Gastrocnemius medialis (tissue), 4 donors: ENCODE measurements at regions of chr14 and their contacts with region 1.

Region 1: GRCh38 chr14:60724137-60724619 is at the start of gene SIX4:
- DNase-seq: peak; percentile 86 to 93
- ATAC-seq: peak; percentile 80 to 81
- H3K4me3 ChIP-seq: peak within 1 kb of the TSS; percentile 75 to 98 (median 88)
- H3K27ac ChIP-seq: peak within 1 kb of the TSS; percentile 89 to 99 (median 97)
- H3K4me1 ChIP-seq: peaks cover 23 to 27% of the 10 kb centered on the region in 2 donors
- H3K27me3 ChIP-seq: no peaks in the 10 kb centered on the region
- CTCF ChIP-seq: no peak
- POLR2A ChIP-seq: peak; percentile 84 to 87
- total RNA-seq, gene SIX4: 27.8 to 62.6 (median 46.1) TPM

Region 2: DNA sequence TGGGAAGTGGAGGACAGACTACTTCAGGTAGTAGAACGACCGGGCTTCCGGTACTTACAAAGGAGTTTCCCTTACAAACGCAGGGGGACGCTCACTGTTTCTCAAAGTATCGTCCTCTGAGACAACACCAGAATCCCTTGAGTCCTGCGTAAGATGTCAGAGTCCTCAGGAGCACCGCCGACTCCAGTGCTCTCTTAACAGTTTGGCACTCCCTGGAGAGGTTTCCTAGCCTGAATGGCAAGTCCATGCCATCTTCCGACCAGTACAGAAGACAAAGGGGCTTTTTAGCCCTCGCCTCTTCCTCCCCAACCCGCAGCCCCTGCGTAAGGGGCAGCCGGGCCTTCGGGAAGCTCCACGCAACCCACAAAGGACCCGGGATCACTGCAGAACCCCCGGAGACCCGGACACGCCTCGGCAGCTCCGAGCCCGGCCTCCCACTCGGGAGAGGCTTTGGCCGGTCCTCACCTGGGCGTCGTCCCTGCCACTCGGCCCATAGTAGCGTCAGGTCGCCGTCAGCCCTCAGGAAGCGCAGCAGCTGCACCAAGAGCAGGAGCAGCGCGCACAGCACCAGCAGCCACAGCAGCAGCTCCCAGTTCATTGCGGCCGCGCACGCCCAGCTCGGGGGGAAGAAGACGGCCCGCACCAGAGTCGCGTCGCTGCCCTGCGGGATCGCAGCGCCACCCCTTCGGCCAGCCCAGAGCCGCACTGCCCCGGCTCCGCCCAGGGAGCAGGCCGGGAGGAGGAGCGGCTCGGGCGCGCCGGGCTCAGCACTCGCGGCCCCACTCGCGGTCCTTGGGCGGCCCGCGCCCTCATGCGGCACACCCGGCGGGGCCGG is 559.2 kb before region 1 on chr14 and contains the start of gene DHRS7:
- in situ Hi-C with region 1: no loop called
- intact Hi-C with region 1: no loop called
- DNase-seq: peak; percentile 72 to 83
- ATAC-seq: peak; percentile 42
- H3K4me3 ChIP-seq: peak within 1 kb of the TSS; percentile 81 to 95 (median 92)
- H3K27ac ChIP-seq: peak within 1 kb of the TSS; percentile 97 to 100 (median 99)
- H3K4me1 ChIP-seq: peaks cover 33 to 52% of the 10 kb centered on the region in 2 donors
- H3K27me3 ChIP-seq: no peaks in the 10 kb centered on the region
- CTCF ChIP-seq: peak in 4 of 5 experiments; percentile 32 to 68 (median 40)
- POLR2A ChIP-seq: peak; percentile 71 to 88
- total RNA-seq, gene DHRS7: 937 to 2,179 (median 1,242) TPM

Region 3: GRCh38 chr14:60648934-60649874 is 75.0 kb before region 1 on chr14 and contains the start of gene SIX1:
- in situ Hi-C with region 1: loop called in 1 of 4 experiments (anchors 10 kb)
- intact Hi-C with region 1: loop called (anchors 2 kb)
- DNase-seq: peak; percentile 88 to 89
- ATAC-seq: peak; percentile 33 to 45
- H3K4me3 ChIP-seq: peak within 1 kb of the TSS; percentile 86 to 90 (median 88)
- H3K27ac ChIP-seq: peak within 1 kb of the TSS; percentile 93 to 98 (median 95)
- H3K4me1 ChIP-seq: peaks cover 31 to 38% of the 10 kb centered on the region in 2 donors
- H3K27me3 ChIP-seq: no peaks in the 10 kb centered on the region
- CTCF ChIP-seq: no peak
- POLR2A ChIP-seq: peak; percentile 97 to 99
- total RNA-seq, gene SIX1: 28.3 to 76.4 (median 56.3) TPM

Region 4: DNA sequence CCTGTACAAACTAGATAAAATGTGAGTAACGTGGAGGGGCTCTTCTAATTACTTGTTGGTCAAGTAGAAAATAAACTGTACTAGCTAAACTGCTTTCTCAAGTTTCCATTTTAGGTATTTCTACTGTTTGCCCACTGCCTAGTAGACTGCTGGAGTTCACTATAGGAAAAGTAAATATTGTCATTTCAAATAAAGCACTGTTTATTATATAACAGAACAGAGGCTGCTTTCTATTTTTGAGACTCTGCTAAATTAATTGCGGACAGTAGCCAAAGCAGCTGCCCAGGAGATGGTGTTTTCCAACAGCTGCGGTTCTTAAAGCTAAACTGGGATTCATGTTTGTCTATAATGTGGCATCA is 59.0 kb before region 1 on chr14:
- in situ Hi-C with region 1: loop called in 2 of 4 experiments (anchors 5 to 10 kb)
- intact Hi-C with region 1: no loop called
- DNase-seq: no peak
- ATAC-seq: peak in 1 of 2 donors; percentile 32
- H3K4me3 ChIP-seq: peak overlapping the region in 1 of 4 donors; percentile 7
- H3K27ac ChIP-seq: peak overlapping the region; percentile 54 to 84 (median 62)
- H3K4me1 ChIP-seq: peaks cover 13 to 14% of the 10 kb centered on the region in 2 donors
- H3K27me3 ChIP-seq: no peaks in the 10 kb centered on the region
- CTCF ChIP-seq: no peak
- POLR2A ChIP-seq: no peak

Region 5: DNA sequence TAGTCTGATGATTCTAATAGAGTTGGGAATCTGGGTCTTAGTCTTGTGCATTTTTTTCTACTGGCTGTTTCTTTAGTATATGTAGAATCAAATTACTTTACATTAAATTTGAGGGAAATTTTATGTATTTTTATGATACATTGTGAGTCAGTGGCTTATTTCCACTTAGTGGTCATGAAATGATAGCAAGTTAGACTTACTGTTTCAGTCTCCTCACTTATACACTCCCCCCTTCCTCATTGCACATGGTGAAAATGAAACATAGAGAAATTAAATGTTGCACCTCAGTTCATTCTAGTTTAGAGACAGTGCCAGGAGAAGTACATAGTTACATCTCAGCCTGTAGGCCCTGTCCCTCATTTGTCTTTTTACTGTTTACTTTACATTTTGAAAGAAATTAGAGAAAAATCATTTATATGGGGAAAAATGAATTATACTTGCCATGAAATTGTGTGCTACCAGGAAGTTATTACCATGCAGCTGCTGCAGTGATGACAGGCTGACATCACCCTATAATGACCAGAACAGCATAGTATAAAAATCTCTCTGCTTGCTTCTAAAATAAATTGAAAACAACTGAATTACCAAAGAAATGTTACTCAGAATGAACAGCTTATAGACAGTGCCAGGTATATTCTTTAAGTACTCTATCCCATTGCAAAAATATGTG is 143.5 kb after region 1 on chr14:
- in situ Hi-C with region 1: no loop called
- intact Hi-C with region 1: loop called (anchors 5 kb)
- DNase-seq: no peak
- ATAC-seq: no peak
- H3K4me3 ChIP-seq: no peak overlapping the region
- H3K27ac ChIP-seq: peak overlapping the region; percentile 76 to 87 (median 84)
- H3K4me1 ChIP-seq: peaks cover 54 to 67% of the 10 kb centered on the region in 2 donors
- H3K27me3 ChIP-seq: no peaks in the 10 kb centered on the region
- CTCF ChIP-seq: no peak
- POLR2A ChIP-seq: no peak

Region 6: GRCh38 chr14:61025251-61026223 is 301.4 kb after region 1 on chr14:
- in situ Hi-C with region 1: no loop called
- intact Hi-C with region 1: loop called (anchors 2 kb)
- DNase-seq: peak; percentile 32 to 62
- ATAC-seq: peak; percentile 84 to 87
- H3K4me3 ChIP-seq: no peak overlapping the region
- H3K27ac ChIP-seq: no peak overlapping the region
- H3K4me1 ChIP-seq: peaks cover 10 to 12% of the 10 kb centered on the region in 2 donors
- H3K27me3 ChIP-seq: no peaks in the 10 kb centered on the region
- CTCF ChIP-seq: peak; percentile 72 to 90 (median 87)
- POLR2A ChIP-seq: no peak

Region 7: DNA sequence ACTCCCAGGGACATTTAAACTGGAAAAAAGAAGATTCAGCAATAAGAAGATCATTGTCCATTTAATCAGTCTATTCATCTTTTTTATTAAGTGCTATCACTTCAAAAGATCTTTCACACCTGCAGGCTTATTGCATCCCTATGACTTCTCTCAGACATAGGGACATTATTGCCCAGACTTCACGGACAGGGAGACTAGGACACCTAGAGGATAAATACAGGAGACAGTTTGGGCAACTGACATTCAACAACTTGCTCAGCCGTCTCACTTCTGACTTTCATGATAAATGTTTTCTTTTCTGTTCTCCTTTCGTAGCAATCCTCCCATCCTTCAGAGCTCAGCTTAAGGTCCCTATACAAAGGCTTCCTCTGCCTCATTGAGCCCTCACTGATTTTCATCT is 472.6 kb after region 1 on chr14:
- in situ Hi-C with region 1: loop called in 1 of 4 experiments (anchors 10 kb)
- intact Hi-C with region 1: loop called (anchors 5 kb)
- DNase-seq: no peak
- ATAC-seq: peak; percentile 74 to 88
- H3K4me3 ChIP-seq: no peak overlapping the region
- H3K27ac ChIP-seq: peak overlapping the region; percentile 55 to 76 (median 62)
- H3K4me1 ChIP-seq: peaks cover 18 to 33% of the 10 kb centered on the region in 2 donors
- H3K27me3 ChIP-seq: no peaks in the 10 kb centered on the region
- CTCF ChIP-seq: peak in 3 of 5 experiments; percentile 40 to 52 (median 40)
- POLR2A ChIP-seq: no peak